SK-N-SH (cell line): ENCODE measurements at regions of chr12 and their contacts with region 1.

Region 1: DNA sequence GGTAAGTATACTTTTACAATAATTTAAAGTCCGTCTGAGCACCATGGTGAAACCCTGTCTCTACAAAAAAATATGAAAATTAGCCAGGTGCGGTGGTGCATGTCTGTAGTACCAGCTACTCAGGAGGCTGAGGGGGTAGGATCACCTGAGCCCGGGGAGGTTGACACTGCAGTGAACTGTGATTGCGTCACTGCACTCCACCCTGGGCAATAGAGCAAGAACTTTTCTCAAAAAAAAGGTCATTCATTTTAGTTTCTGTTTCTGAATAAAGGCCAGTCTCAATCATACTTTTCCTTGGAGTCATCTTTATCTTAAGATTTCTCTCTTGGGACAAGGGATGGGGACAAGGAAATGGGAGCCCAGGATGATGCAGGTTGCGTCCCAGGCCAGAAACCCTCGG is 12.9 kb downstream of the ANKRD13A start:
- DNase-seq: no peak
- H3K4me3 ChIP-seq: no peak overlapping the region
- H3K27ac ChIP-seq: no peak overlapping the region
- H3K4me1 ChIP-seq: no peaks in the 10 kb centered on the region
- H3K27me3 ChIP-seq: no peaks in the 10 kb centered on the region
- CTCF ChIP-seq: no peak
- EP300 ChIP-seq: no peak
- RAD21 ChIP-seq: no peak

Region 2: GRCh38 chr12:110023621-110024020 is 11.5 kb after region 1 on chr12:
- CTCF ChIA-PET with region 1: interaction called, 10 read pairs
- POLR2A ChIA-PET with region 1: no interaction called
- DNase-seq: peak; percentile 24
- H3K4me3 ChIP-seq: no peak overlapping the region
- H3K27ac ChIP-seq: peak overlapping the region; percentile 59 to 71
- H3K4me1 ChIP-seq: peaks cover 13 to 28% of the 10 kb centered on the region in 2 experiments
- H3K27me3 ChIP-seq: no peaks in the 10 kb centered on the region
- CTCF ChIP-seq: no peak
- EP300 ChIP-seq: no peak
- RAD21 ChIP-seq: no peak